Breast epithelium (tissue), 4 donors: ENCODE measurements at regions of chr1 and their contacts with region 1.

Region 1: GRCh38 chr1:164337885-164338284 is 221.1 kb upstream of the PBX1 start:
- DNase-seq: no peak
- H3K4me3 ChIP-seq: no peak overlapping the region
- H3K27ac ChIP-seq: no peak overlapping the region
- H3K4me1 ChIP-seq: no peaks in the 10 kb centered on the region
- H3K27me3 ChIP-seq: no peaks in the 10 kb centered on the region
- CTCF ChIP-seq: no peak
- POLR2A ChIP-seq: no peak

Region 2: GRCh38 chr1:163766257-163766918 is 571.5 kb before region 1 on chr1:
- intact Hi-C with region 1: loop called (anchors 10 kb)
- DNase-seq: no peak
- H3K4me3 ChIP-seq: no peak overlapping the region
- H3K27ac ChIP-seq: no peak overlapping the region
- H3K4me1 ChIP-seq: no peaks in the 10 kb centered on the region
- H3K27me3 ChIP-seq: no peaks in the 10 kb centered on the region
- CTCF ChIP-seq: no peak
- POLR2A ChIP-seq: no peak

Region 3: DNA sequence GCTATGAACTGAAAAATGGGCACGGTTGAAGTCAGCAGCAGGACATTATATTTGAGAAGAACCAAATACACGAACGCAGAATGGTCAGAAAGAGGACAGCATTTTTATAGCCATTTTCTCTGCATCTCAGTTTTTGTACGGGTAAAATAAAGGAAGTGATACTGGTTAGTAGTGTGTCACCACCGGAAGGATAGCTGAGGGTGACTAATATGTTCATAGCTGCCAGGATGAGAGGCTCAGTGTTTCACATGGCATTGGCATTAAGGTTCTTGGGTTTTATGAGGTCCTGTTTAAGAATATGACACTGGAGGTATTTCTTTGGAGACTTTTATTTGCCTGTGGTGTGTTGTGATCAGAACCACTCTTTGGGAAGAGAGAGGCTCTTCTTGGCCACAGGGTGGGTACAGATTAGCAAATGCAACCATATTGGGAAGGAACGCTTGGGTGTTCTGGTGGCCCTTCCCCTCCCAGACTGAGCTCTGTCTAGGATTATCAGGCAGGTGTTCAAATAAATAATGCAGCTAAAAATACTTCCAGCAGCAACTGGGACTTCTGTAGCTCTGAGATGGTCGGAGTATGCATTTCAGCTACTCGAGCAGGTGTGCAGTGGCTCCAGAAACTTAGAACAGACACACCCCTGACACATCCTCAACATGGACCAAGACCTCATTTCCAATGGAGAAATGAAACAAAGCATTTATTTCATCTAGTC is 379.3 kb after region 1 on chr1:
- intact Hi-C with region 1: no loop called
- DNase-seq: no peak
- H3K4me3 ChIP-seq: no peak overlapping the region
- H3K27ac ChIP-seq: no peak overlapping the region
- H3K4me1 ChIP-seq: peaks cover 0 to 8% of the 10 kb centered on the region in 2 donors
- H3K27me3 ChIP-seq: no peaks in the 10 kb centered on the region
- CTCF ChIP-seq: no peak
- POLR2A ChIP-seq: no peak